ENCODE measurements at regions of chr20 and their contacts with region 1.

Region 1: DNA sequence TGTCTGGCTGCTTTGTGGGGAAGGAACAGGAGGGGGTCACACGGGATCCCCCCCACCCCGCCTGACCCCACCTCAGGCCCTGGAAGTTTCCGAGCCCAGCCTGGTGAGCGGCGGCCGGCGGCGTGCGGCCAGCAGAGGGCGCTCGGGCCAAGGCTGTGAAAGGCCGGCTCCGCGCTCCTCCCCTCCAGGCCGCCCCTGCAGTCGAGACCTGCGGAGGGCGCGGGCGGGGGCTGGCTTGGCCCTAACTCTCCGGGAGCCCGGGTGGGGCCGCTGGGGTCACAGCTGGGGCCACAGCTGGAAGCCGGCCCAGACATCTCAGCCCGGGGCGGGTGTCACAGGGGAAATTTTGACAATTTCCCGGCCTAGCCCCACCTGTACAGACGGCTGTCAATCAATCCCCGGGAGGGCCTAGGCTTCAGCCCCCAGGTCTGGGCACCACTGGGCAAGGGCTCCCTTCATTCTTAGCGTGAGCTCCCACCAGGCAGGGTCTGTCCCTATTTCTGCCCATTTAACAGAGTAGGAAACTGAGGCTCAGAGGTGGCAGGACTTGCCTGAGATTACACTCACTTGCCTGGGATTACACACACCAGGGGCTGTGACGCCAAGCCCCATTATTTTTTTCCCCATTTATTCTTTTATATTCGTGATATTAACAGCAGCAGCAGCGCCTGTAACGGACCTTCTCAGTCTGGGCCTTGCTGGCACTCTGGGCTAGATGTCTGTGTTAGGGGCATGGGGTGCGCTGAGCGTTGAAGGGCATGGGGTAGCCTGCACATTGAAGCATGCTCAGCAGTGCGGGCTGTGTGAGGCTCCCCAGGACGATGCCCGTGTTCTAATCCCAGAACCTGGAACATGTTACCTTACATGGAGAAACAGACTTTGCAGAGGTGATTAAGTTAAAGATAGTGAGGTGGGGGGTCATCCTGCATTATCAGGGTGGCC is 23.0 kb downstream of the ZBP1 start:
- DNase-seq: peak; percentile 58 to 88 (median 71)
- ATAC-seq: peak; percentile 85
- H3K4me3 ChIP-seq: peak overlapping the region; percentile 20
- H3K4me3 Mint-ChIP-seq: no peak overlapping the region
- H3K27ac ChIP-seq: no peak overlapping the region
- H3K27ac Mint-ChIP-seq: no peak overlapping the region
- H3K4me1 ChIP-seq: peaks cover 16% of the 10 kb centered on the region
- H3K4me1 Mint-ChIP-seq: no peaks in the 10 kb centered on the region
- H3K27me3 ChIP-seq: no peaks in the 10 kb centered on the region
- H3K27me3 Mint-ChIP-seq: peaks cover 5% of the 10 kb centered on the region
- CTCF ChIP-seq: peak; percentile 94

Region 2: GRCh38 chr20:57089691-57090150 is 507.5 kb before region 1 on chr20:
- CTCF ChIA-PET with region 1: no interaction called
- POLR2A ChIA-PET with region 1: no interaction called
- intact Hi-C with region 1: loop called (anchors 1 to 5 kb)
- DNase-seq: peak; percentile 17 to 66 (median 44)
- ATAC-seq: peak; percentile 64
- H3K4me3 ChIP-seq: no peak overlapping the region
- H3K4me3 Mint-ChIP-seq: no peak overlapping the region
- H3K27ac ChIP-seq: no peak overlapping the region
- H3K27ac Mint-ChIP-seq: no peak overlapping the region
- H3K4me1 ChIP-seq: peaks cover 8% of the 10 kb centered on the region
- H3K4me1 Mint-ChIP-seq: peaks cover 13% of the 10 kb centered on the region
- H3K27me3 ChIP-seq: peaks cover 4% of the 10 kb centered on the region in 2 experiments
- H3K27me3 Mint-ChIP-seq: peaks cover 10% of the 10 kb centered on the region
- CTCF ChIP-seq: peak; percentile 62

Region 3: GRCh38 chr20:57484797-57485196 is 112.5 kb before region 1 on chr20:
- CTCF ChIA-PET with region 1: no interaction called
- POLR2A ChIA-PET with region 1: no interaction called
- intact Hi-C with region 1: no loop called
- DNase-seq: no peak
- ATAC-seq: no peak
- H3K4me3 ChIP-seq: no peak overlapping the region
- H3K4me3 Mint-ChIP-seq: no peak overlapping the region
- H3K27ac ChIP-seq: no peak overlapping the region
- H3K27ac Mint-ChIP-seq: no peak overlapping the region
- H3K4me1 ChIP-seq: peaks cover 24% of the 10 kb centered on the region
- H3K4me1 Mint-ChIP-seq: peaks cover 22% of the 10 kb centered on the region
- H3K27me3 ChIP-seq: no peaks in the 10 kb centered on the region
- H3K27me3 Mint-ChIP-seq: no peaks in the 10 kb centered on the region
- CTCF ChIP-seq: no peak

Region 4: GRCh38 chr20:57498425-57499400 is 98.6 kb before region 1 on chr20:
- CTCF ChIA-PET with region 1: interaction called, 5 read pairs
- POLR2A ChIA-PET with region 1: no interaction called
- intact Hi-C with region 1: loop called (anchors 2 to 5 kb)
- DNase-seq: peak in 8 of 14 experiments; percentile 18 to 69 (median 38)
- ATAC-seq: peak; percentile 78
- H3K4me3 ChIP-seq: no peak overlapping the region
- H3K4me3 Mint-ChIP-seq: no peak overlapping the region
- H3K27ac ChIP-seq: no peak overlapping the region
- H3K27ac Mint-ChIP-seq: no peak overlapping the region
- H3K4me1 ChIP-seq: peaks cover 15% of the 10 kb centered on the region
- H3K4me1 Mint-ChIP-seq: peaks cover 13% of the 10 kb centered on the region
- H3K27me3 ChIP-seq: peaks cover 19 to 22% of the 10 kb centered on the region in 2 experiments
- H3K27me3 Mint-ChIP-seq: peaks cover 51% of the 10 kb centered on the region
- CTCF ChIP-seq: peak; percentile 28

Region 5: DNA sequence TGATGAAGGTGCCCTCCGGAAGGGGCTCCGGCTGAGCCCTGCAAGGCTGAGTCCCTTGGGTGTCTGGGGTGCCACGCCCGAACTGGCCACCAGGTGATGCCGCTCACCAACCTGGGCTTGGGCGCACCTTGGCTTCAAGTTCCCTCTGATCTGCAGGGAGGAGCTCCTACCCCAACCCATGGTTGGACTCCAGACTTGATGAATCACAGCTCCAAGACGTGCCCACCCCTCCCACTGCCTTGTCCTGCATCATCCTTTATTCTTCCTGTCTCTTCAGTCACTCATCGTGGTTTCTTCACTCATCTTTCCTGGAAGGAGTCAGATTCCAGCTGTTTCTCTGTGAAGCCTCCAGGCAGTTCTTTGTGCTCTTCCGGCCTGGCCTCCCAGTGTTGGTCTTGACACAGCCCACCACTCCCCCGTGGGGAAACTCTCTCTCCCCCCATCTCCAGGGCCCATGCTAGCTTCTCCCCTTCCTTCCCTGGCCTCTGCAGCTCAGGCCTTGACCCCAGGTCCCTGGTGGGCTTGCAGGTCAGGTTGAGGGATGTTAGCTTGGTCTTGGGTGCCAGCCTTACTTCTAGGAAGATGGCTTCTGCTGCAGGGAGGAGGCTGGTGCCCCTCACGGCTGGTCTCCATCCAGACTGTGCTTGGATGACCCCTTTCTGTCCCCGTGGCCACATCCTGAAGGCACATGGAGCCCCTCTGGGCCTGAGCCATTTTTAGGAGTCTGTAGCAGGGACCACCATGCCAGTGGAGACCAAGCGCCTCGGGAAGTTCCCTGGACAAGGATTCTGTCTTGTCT is 25.5 kb after region 1 on chr20:
- CTCF ChIA-PET with region 1: interaction called, 9 read pairs
- POLR2A ChIA-PET with region 1: interaction called, 12 read pairs
- intact Hi-C with region 1: no loop called
- DNase-seq: peak; percentile 65 to 85 (median 74)
- ATAC-seq: peak; percentile 53
- H3K4me3 ChIP-seq: no peak overlapping the region
- H3K4me3 Mint-ChIP-seq: peak overlapping the region; percentile 87
- H3K27ac ChIP-seq: no peak overlapping the region
- H3K27ac Mint-ChIP-seq: peak overlapping the region; percentile 84
- H3K4me1 ChIP-seq: peaks cover 71% of the 10 kb centered on the region
- H3K4me1 Mint-ChIP-seq: peaks cover 88% of the 10 kb centered on the region
- H3K27me3 ChIP-seq: no peaks in the 10 kb centered on the region
- H3K27me3 Mint-ChIP-seq: no peaks in the 10 kb centered on the region
- CTCF ChIP-seq: peak; percentile 73

Region 6: GRCh38 chr20:57680131-57680716 is 83.0 kb after region 1 on chr20:
- CTCF ChIA-PET with region 1: interaction called, 5 read pairs
- POLR2A ChIA-PET with region 1: no interaction called
- intact Hi-C with region 1: loop called in 1 of 2 experiments (anchors 1 kb)
- DNase-seq: peak in 2 of 14 experiments; percentile 38 to 49
- ATAC-seq: no peak
- H3K4me3 ChIP-seq: no peak overlapping the region
- H3K4me3 Mint-ChIP-seq: no peak overlapping the region
- H3K27ac ChIP-seq: no peak overlapping the region
- H3K27ac Mint-ChIP-seq: no peak overlapping the region
- H3K4me1 ChIP-seq: peaks cover 15% of the 10 kb centered on the region
- H3K4me1 Mint-ChIP-seq: peaks cover 35% of the 10 kb centered on the region
- H3K27me3 ChIP-seq: peaks cover 0 to 2% of the 10 kb centered on the region in 2 experiments
- H3K27me3 Mint-ChIP-seq: no peaks in the 10 kb centered on the region
- CTCF ChIP-seq: no peak

Region 7: GRCh38 chr20:58179432-58180099 is 582.3 kb after region 1 on chr20:
- CTCF ChIA-PET with region 1: interaction called, 6 read pairs
- POLR2A ChIA-PET with region 1: no interaction called
- intact Hi-C with region 1: loop called (anchors 1 kb)
- DNase-seq: peak; percentile 45 to 82 (median 64)
- ATAC-seq: peak; percentile 92
- H3K4me3 ChIP-seq: peak overlapping the region; percentile 32
- H3K4me3 Mint-ChIP-seq: peak overlapping the region; percentile 42
- H3K27ac ChIP-seq: no peak overlapping the region
- H3K27ac Mint-ChIP-seq: no peak overlapping the region
- H3K4me1 ChIP-seq: peaks cover 14% of the 10 kb centered on the region
- H3K4me1 Mint-ChIP-seq: peaks cover 4% of the 10 kb centered on the region
- H3K27me3 ChIP-seq: peaks cover 22 to 26% of the 10 kb centered on the region in 2 experiments
- H3K27me3 Mint-ChIP-seq: peaks cover 33% of the 10 kb centered on the region
- CTCF ChIP-seq: peak; percentile 97

Measured in CD4-positive, alpha-beta T cell (primary cell).